Activated CD4-positive, alpha-beta T cell treated with anti-CD3 and anti-CD28 coated beads, Interleukin-2, amount 10 ng/mL, durations not matched to agents 24 days and 14 days (primary cell): ENCODE measurements at regions of chr10 and their contacts with region 1.

Region 1: GRCh38 chr10:102853944-102854694 is at the start of gene BORCS7:
- DNase-seq: peak; percentile 96
- H3K4me3 Mint-ChIP-seq: peak within 1 kb of the TSS; percentile 98
- H3K27ac Mint-ChIP-seq: peak within 1 kb of the TSS; percentile 97
- H3K4me1 Mint-ChIP-seq: peaks cover 13% of the 10 kb centered on the region
- H3K27me3 Mint-ChIP-seq: no peaks in the 10 kb centered on the region
- total RNA-seq, gene BORCS7: 8.1 and 9.8 TPM in 2 replicates

Region 2: GRCh38 chr10:102743588-102744373 is 110.3 kb before region 1 on chr10 and contains the start of gene WBP1L:
- intact Hi-C with region 1: loop called (anchors 1 kb)
- DNase-seq: peak; percentile 98
- H3K4me3 Mint-ChIP-seq: peak within 1 kb of the TSS; percentile 83
- H3K27ac Mint-ChIP-seq: peak within 1 kb of the TSS; percentile 81
- H3K4me1 Mint-ChIP-seq: peaks cover 38% of the 10 kb centered on the region
- H3K27me3 Mint-ChIP-seq: no peaks in the 10 kb centered on the region
- total RNA-seq, gene WBP1L: 15.6 and 15.8 TPM in 2 replicates

Region 3: GRCh38 chr10:102802920-102803534 is 51.1 kb before region 1 on chr10:
- intact Hi-C with region 1: loop called (anchors 1 kb)
- DNase-seq: peak; percentile 73
- H3K4me3 Mint-ChIP-seq: peak overlapping the region; percentile 80
- H3K27ac Mint-ChIP-seq: peak overlapping the region; percentile 100
- H3K4me1 Mint-ChIP-seq: peaks cover 22% of the 10 kb centered on the region
- H3K27me3 Mint-ChIP-seq: no peaks in the 10 kb centered on the region